K562 (cell line): ENCODE measurements at regions of chr10 and their contacts with region 1.

Region 1: DNA sequence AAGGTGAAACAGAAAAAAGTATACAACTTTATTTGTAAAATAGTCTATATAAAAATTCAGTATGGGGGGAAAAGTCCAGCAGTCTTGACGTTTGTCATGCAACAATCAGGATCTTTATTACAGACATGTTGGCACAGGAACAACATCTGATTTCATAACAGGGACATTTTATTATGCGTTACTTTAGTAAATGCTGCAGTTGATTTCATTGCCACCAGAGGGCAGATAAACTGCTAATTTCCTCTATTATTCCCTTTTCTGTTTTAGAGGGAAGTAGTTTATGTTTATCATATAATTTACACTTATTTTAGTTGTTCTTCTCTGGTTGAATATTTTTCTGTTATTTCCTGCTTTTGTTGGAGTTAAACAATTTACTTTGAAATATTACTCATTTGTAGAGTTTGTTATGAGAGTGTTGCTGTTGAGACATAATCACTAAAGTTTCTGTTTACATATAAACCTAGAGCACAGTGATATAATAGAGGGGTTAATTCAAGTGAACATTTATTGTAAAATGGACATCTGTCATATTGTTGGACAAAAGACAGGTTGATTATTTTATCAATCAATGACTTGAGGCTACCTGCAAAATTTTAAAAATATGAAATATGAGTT is 3.3 kb downstream of the PLXDC2 start:
- DNase-seq: peak; percentile 10 to 24 (median 17)
- ATAC-seq: no peak
- H3K4me3 ChIP-seq: no peak overlapping the region
- H3K27ac ChIP-seq: no peak overlapping the region
- H3K4me1 ChIP-seq: peaks cover 0 to 18% of the 10 kb centered on the region in 2 experiments; a peak in 2 of 5 replicates
- H3K27me3 ChIP-seq: peaks cover 0 to 15% of the 10 kb centered on the region in 2 experiments; a peak in 3 of 5 replicates
- CTCF ChIP-seq: peak; percentile 20 to 63 (median 52); a peak in 4 of 6 replicates
- EP300 ChIP-seq: no peak
- POLR2A ChIP-seq: no peak
- RAD21 ChIP-seq: peak; percentile 50 to 74

Region 2: DNA sequence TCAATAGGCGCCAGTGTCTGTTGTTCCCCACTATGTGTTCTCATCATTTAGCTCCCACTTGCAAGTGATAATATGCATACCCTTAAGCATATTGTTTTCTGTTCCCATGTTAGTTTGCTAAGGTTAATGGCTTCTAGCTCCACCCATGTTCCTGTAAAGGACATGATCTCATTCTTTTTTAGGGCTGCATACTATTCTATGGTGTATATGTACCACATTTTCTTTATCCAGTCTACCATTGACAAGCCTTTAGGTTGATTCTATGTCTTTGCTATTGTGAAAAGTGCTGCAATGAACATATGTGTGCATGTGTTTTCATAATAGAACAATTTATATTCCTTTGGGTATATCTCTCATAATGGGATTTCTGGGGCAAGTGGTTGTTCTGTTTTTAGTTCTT is 81.1 kb before region 1 on chr10:
- CTCF ChIA-PET with region 1: no interaction called
- POLR2A ChIA-PET with region 1: no interaction called
- in situ Hi-C with region 1: no loop called
- intact Hi-C with region 1: no loop called
- DNase-seq: no peak
- ATAC-seq: no peak
- H3K4me3 ChIP-seq: no peak overlapping the region
- H3K27ac ChIP-seq: no peak overlapping the region
- H3K4me1 ChIP-seq: no peaks in the 10 kb centered on the region
- H3K27me3 ChIP-seq: no peaks in the 10 kb centered on the region
- CTCF ChIP-seq: no peak
- EP300 ChIP-seq: no peak
- POLR2A ChIP-seq: no peak
- RAD21 ChIP-seq: no peak

Region 3: GRCh38 chr10:19775296-19775695 is 44.2 kb before region 1 on chr10:
- CTCF ChIA-PET with region 1: no interaction called
- POLR2A ChIA-PET with region 1: no interaction called
- in situ Hi-C with region 1: no loop called
- intact Hi-C with region 1: no loop called
- DNase-seq: peak in 1 of 4 experiments; percentile 7
- ATAC-seq: no peak
- H3K4me3 ChIP-seq: no peak overlapping the region
- H3K27ac ChIP-seq: no peak overlapping the region
- H3K4me1 ChIP-seq: no peaks in the 10 kb centered on the region; a peak in 1 of 5 replicates
- H3K27me3 ChIP-seq: no peaks in the 10 kb centered on the region
- CTCF ChIP-seq: no peak
- EP300 ChIP-seq: no peak
- POLR2A ChIP-seq: no peak
- RAD21 ChIP-seq: no peak

Region 4: DNA sequence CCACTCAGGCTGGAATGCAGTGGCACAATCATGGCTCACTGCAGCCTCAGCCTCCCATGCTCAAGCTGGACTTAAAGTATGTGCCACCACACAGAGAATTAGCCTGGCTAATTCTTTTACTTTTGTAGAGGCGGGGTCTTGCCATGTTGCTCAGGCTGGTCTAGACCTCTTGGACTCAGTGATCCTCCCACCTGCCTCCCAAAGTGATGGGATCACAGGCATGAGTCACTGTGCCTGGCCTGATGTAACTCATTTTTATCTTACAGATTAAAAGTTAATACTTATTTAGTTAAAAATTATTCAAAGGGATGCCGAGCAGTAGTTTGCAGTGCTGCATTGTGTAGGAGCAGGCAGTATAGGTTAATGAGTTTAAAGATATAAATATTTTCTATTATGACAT is 15.8 kb before region 1 on chr10:
- CTCF ChIA-PET with region 1: no interaction called
- POLR2A ChIA-PET with region 1: no interaction called
- in situ Hi-C with region 1: no loop called
- intact Hi-C with region 1: no loop called
- DNase-seq: no peak
- ATAC-seq: no peak
- H3K4me3 ChIP-seq: no peak overlapping the region
- H3K27ac ChIP-seq: no peak overlapping the region
- H3K4me1 ChIP-seq: no peaks in the 10 kb centered on the region
- H3K27me3 ChIP-seq: no peaks in the 10 kb centered on the region
- CTCF ChIP-seq: no peak
- EP300 ChIP-seq: no peak
- POLR2A ChIP-seq: no peak
- RAD21 ChIP-seq: no peak

Region 5: DNA sequence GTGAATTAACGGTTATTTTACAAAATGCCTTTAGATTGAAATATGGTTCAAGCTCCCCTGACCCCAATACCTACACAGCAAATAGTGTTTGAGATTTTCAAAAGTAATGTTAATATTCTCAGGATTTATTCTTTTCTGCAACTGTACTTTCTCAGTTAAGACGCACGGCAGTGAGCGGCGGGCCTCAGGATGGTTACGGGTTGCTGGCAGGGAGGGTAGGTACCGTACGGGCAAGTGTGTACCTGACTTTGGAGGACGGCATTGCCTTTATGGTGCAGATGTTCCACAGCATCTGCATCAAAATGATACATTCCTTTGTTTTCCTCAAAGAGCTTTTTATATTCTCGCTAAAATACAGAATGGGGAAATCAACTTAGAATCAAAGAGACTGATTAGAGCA is 1032.8 kb after region 1 on chr10:
- CTCF ChIA-PET with region 1: interaction called, 3 read pairs
- POLR2A ChIA-PET with region 1: no interaction called
- in situ Hi-C with region 1: no loop called
- intact Hi-C with region 1: loop called (anchors 5 kb)
- DNase-seq: no peak
- ATAC-seq: no peak
- H3K4me3 ChIP-seq: no peak overlapping the region
- H3K27ac ChIP-seq: no peak overlapping the region
- H3K4me1 ChIP-seq: no peaks in the 10 kb centered on the region
- H3K27me3 ChIP-seq: no peaks in the 10 kb centered on the region
- CTCF ChIP-seq: no peak
- EP300 ChIP-seq: no peak
- POLR2A ChIP-seq: no peak
- RAD21 ChIP-seq: no peak